ENCODE measurements at regions of chr19 and their contacts with region 1.

Region 1: GRCh38 chr19:54882758-54883157 is 8.7 kb downstream of the FCAR start:
- DNase-seq: no peak
- H3K4me3 Mint-ChIP-seq: no peak overlapping the region
- H3K27ac Mint-ChIP-seq: no peak overlapping the region
- H3K4me1 Mint-ChIP-seq: no peaks in the 10 kb centered on the region
- H3K27me3 Mint-ChIP-seq: peaks cover 15% of the 10 kb centered on the region

Region 2: DNA sequence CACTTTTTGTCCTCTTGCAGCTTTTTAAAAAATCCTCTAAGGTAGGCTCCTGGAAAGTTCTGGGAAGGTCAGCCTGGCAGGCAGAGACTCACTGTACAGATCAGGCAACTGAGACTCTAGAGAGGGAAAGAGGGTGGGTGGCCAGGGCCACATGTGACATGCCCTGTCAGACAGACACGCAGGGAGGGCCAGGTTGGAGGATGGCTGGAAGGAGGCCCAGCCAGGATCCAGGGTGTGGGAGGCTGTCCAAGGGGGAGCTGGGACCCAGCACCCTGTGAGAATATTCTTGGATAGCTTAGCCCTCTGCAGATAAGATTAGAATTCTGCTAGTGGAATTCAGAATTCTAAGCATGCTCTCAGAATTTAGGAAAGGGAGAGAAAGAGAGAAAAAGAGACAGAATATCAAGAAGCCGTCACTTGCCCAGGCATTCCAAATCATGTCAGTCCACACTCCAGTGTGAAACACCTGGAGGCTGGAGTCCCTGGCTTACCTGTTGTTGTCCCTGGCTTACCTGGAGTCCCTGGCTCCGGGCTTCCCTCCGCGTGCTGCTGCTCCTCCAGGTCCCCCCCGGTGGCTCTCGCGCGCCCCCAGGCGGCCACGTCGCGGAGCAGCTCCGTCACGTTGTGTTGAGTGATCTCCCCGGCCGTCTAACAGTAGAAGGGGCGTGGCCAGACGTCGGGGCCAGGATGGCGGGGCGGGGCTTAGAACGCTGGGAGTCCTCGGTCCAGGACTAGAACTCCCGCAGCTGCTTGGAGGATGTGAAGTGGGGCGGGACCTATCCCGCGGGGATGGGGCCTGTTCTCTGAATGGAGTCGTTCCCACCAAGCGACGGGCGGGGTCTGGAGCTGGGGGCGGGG is 277.6 kb after region 1 on chr19:
- CTCF ChIA-PET with region 1: no interaction called
- intact Hi-C with region 1: loop called (anchors 5 kb)
- DNase-seq: peak; percentile 94
- H3K4me3 Mint-ChIP-seq: no peak overlapping the region
- H3K27ac Mint-ChIP-seq: no peak overlapping the region
- H3K4me1 Mint-ChIP-seq: peaks cover 9% of the 10 kb centered on the region
- H3K27me3 Mint-ChIP-seq: peaks cover 48% of the 10 kb centered on the region

Measured in activated naive CD4-positive, alpha-beta T cell treated with anti-CD3 and anti-CD28 coated beads for 36 hours (primary cell).